Activated CD4-positive, alpha-beta T cell treated with anti-CD3 and anti-CD28 coated beads for 36 hours (primary cell): ENCODE measurements at regions of chr10 and their contacts with region 1.

Region 1: GRCh38 chr10:99845837-99846382 is 63.5 kb downstream of the ABCC2 start:
- DNase-seq: peak; percentile 81
- ATAC-seq: peak; percentile 95
- H3K4me3 Mint-ChIP-seq: no peak overlapping the region
- H3K27ac Mint-ChIP-seq: no peak overlapping the region
- H3K4me1 Mint-ChIP-seq: peaks cover 3% of the 10 kb centered on the region
- H3K27me3 Mint-ChIP-seq: no peaks in the 10 kb centered on the region

Region 2: DNA sequence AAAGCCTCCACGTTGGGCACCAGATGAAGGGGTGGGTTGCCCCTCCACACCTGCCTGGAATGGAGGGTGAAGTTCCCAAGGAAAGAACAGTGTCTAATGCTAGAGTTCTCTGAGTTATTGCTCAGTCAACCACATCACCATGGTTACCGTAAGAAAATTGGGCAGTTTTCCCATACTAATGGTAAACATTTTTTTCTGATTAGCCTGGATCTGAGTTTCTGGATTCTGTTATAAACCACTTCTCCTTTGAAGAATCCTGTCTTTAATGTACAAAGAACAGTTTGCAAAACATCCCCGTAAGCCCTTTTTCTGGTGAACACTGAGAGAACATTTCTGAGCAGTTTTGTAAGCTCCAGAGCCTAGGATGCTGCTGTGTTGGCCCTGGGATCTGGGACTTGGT is 18.0 kb before region 1 on chr10:
- CTCF ChIA-PET with region 1: interaction called, 14 read pairs
- POLR2A ChIA-PET with region 1: no interaction called
- intact Hi-C with region 1: no loop called
- DNase-seq: no peak
- ATAC-seq: no peak
- H3K4me3 Mint-ChIP-seq: no peak overlapping the region
- H3K27ac Mint-ChIP-seq: no peak overlapping the region
- H3K4me1 Mint-ChIP-seq: peaks cover 5% of the 10 kb centered on the region
- H3K27me3 Mint-ChIP-seq: no peaks in the 10 kb centered on the region

Region 3: DNA sequence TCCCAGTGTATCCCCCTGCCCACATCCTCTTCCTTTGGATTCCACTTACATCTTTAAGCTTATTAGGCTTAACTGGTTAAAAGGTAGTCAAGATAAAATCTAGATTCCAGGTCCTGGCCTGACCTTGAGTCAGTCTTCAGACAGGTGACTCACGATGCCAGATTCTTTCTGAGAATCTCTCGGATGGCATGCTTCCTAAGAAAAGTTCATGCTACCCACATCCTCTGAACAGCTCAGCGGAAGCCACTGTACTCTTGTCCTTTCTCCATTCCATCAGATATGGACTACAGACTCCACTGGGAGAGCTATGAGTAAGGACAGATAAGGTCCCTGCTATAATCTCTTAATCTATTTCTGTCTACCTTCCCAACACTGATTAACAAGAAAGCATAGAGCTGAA is 120.4 kb after region 1 on chr10:
- CTCF ChIA-PET with region 1: interaction called, 17 read pairs
- POLR2A ChIA-PET with region 1: no interaction called
- intact Hi-C with region 1: loop called in 1 of 2 experiments (anchors 1 kb)
- DNase-seq: no peak
- ATAC-seq: no peak
- H3K4me3 Mint-ChIP-seq: no peak overlapping the region
- H3K27ac Mint-ChIP-seq: no peak overlapping the region
- H3K4me1 Mint-ChIP-seq: no peaks in the 10 kb centered on the region
- H3K27me3 Mint-ChIP-seq: no peaks in the 10 kb centered on the region

Region 4: DNA sequence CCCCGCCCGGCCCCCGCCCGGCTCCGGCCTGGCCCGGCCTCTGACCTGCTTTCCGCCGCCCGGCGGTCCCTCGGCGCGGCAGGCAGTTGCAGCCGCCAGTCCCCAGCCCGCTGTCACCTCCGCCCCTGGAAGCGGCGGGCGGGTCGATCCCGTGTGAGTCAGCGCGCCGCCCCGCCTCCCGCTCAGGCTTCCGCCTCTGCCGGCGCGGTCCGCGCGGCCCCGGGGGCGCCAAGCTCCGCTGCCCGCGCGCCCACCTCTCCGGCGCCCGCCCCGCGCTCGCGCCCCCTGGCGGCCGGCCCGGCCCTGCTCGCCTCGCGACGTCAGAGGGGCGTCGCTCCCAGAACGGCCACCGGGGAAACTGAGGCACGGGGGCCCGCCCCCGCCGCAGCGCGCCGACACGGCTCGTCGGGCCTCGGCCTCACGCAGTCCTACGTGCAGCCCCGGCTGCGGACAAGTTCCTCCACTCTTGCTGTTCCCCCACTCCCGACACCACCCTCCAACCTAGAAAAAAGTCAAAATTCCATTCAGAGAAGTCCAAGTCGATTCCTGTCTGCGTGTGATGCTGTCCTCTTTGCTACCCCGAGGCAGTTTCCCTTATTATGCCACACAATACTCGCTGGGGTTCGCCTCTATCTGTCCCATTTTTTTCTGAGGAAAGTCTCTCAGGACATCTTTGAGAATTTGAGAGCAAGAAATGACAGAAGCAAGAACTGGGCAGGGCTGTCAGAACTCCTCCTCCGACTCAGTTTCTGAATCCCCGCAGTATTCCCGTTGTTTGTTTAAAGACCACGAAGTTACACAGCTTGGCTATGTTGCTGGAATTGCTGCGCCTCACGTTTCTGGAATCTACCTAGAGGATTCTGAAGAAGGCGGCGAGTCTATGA is 164.1 kb after region 1 on chr10 and contains the start of gene DNMBP:
- CTCF ChIA-PET with region 1: interaction called, 26 read pairs
- POLR2A ChIA-PET with region 1: no interaction called
- intact Hi-C with region 1: loop called (anchors 1 to 5 kb)
- DNase-seq: peak; percentile 91
- ATAC-seq: peak; percentile 91
- H3K4me3 Mint-ChIP-seq: peak within 1 kb of the TSS; percentile 74
- H3K27ac Mint-ChIP-seq: peak within 1 kb of the TSS; percentile 79
- H3K4me1 Mint-ChIP-seq: peaks cover 46% of the 10 kb centered on the region
- H3K27me3 Mint-ChIP-seq: peaks cover 8% of the 10 kb centered on the region
- total RNA-seq, gene DNMBP: 1.9 to 2.4 TPM

Region 5: DNA sequence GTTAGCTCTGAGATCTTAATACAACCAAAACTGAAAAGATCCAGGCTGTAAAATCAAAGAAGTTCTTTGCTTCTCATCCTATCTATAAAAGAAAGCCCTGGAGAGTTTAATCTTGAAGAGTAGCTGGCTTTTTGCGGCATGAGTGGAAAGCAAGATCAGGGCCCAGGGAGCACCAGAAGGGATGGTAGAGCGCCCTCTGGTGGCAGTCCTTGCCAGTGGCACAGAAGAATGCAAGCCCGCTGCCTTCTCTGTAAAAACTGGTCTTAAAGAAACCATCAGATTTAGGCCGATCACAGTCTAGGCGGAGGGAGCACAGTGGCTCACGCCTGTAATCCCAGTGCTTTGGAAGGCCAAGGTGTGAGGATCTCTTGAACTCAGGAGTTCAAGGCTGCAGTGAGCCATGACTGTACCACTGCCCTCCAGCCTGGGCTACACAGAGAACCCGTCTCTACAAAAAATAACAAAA is 200.1 kb after region 1 on chr10:
- CTCF ChIA-PET with region 1: interaction called, 131 read pairs
- POLR2A ChIA-PET with region 1: interaction called, 3 read pairs
- intact Hi-C with region 1: loop called (anchors 1 kb)
- DNase-seq: peak; percentile 93
- ATAC-seq: peak; percentile 69
- H3K4me3 Mint-ChIP-seq: no peak overlapping the region
- H3K27ac Mint-ChIP-seq: no peak overlapping the region
- H3K4me1 Mint-ChIP-seq: peaks cover 6% of the 10 kb centered on the region
- H3K27me3 Mint-ChIP-seq: peaks cover 2% of the 10 kb centered on the region

Region 6: DNA sequence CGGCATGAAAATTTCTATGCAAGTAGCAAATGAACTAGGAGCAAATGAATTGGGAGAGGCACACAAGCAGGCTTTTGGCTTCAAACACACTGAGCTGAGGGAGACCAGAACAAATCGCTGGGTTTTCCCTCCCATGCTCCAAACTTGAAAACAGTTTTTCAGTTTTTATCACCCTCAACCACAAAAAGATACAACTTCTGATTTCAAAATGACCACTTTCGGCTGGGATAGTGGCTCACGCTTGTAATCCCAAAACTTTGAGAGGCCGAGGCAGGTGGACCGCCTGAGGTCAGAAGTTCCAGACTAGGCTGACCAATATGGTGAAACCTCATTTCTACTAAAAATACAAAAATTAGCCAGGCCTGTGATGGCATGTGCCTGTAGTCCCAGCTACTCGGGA is 392.5 kb after region 1 on chr10:
- CTCF ChIA-PET with region 1: interaction called, 5 read pairs
- POLR2A ChIA-PET with region 1: no interaction called
- intact Hi-C with region 1: loop called in 1 of 2 experiments (anchors 2 kb)
- DNase-seq: no peak
- ATAC-seq: no peak
- H3K4me3 Mint-ChIP-seq: no peak overlapping the region
- H3K27ac Mint-ChIP-seq: peak overlapping the region; percentile 33
- H3K4me1 Mint-ChIP-seq: peaks cover 11% of the 10 kb centered on the region
- H3K27me3 Mint-ChIP-seq: no peaks in the 10 kb centered on the region

Region 7: GRCh38 chr10:100433253-100434240 is 587.6 kb after region 1 on chr10:
- CTCF ChIA-PET with region 1: no interaction called
- POLR2A ChIA-PET with region 1: no interaction called
- intact Hi-C with region 1: loop called in 1 of 2 experiments (anchors 10 kb)
- DNase-seq: peak; percentile 98
- ATAC-seq: peak; percentile 98
- H3K4me3 Mint-ChIP-seq: peak overlapping the region; percentile 7
- H3K27ac Mint-ChIP-seq: no peak overlapping the region
- H3K4me1 Mint-ChIP-seq: peaks cover 5% of the 10 kb centered on the region
- H3K27me3 Mint-ChIP-seq: peaks cover 2% of the 10 kb centered on the region